Activated CD4-positive, alpha-beta T cell treated with anti-CD3 and anti-CD28 coated beads, Interleukin-2, amount 10 ng/mL, durations not matched to agents 24 days and 14 days (primary cell): ENCODE measurements at regions of chr7 and their contacts with region 1.

Region 1: DNA sequence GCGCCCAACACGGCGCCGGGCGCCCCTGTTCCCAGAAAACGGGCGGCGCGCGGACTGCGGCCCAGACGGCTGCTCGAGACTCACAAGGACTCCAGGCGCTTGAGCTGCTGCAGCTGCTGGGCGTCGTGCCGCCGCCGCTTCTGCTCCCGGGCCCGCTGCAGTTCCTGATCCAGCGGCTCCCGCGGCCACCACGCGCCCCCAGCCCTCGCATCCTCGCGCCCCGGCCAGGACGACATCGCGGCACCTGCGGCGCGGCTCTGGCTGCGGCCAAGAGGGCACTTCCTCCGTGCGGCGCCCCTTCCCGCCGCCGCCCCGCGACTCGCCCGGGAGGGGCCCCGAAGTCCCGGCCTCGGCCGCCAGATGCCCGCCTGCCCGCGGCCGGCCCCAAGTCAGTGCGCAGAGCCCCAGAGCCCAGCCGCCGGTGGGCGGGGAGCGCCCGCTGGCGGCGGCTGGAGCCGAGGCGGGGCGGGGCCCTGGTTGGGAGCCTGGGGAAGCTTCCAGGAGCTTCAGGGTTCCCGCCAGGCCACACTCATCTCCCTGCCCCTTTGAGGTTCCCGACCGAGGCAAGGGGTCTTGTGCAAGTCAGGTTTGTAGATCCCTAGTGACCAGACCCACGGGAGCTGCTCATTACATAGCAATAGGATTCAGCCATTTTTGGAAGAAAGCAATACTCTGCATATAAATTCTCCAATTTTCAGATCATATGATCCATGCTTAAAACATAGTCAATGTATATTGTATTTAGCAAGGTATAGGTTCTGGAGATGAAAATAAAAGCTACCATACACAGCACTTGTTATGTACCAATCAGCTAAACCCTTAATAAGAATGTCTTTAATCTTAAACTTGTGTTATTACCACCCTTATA is 14.2 kb upstream of the FKBP9 start:
- DNase-seq: peak; percentile 91
- H3K4me3 Mint-ChIP-seq: peak overlapping the region; percentile 93
- H3K27ac Mint-ChIP-seq: peak overlapping the region; percentile 8
- H3K4me1 Mint-ChIP-seq: peaks cover 17% of the 10 kb centered on the region
- H3K27me3 Mint-ChIP-seq: peaks cover 8% of the 10 kb centered on the region

Region 2: DNA sequence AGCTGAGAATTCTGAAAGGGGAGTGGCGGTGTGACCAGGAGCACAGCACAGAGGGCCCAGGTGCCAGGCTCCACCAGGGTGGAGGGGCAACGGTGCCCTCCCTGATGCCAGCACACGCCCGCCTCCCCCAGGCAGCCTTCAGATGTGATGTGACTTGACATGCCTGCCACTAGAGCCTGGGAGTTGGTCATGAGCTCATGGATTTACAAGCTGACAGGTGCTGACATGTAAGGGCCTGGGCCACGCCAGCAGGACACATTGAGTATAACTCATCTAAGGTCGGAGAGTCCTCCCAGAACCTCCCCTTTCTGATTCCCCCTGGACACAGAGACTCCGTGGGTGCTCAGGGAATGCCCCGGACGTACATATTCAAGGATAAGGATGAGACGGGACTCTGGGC is 527.1 kb before region 1 on chr7:
- intact Hi-C with region 1: no loop called
- DNase-seq: no peak
- H3K4me3 Mint-ChIP-seq: no peak overlapping the region
- H3K27ac Mint-ChIP-seq: no peak overlapping the region
- H3K4me1 Mint-ChIP-seq: no peaks in the 10 kb centered on the region
- H3K27me3 Mint-ChIP-seq: no peaks in the 10 kb centered on the region

Region 3: DNA sequence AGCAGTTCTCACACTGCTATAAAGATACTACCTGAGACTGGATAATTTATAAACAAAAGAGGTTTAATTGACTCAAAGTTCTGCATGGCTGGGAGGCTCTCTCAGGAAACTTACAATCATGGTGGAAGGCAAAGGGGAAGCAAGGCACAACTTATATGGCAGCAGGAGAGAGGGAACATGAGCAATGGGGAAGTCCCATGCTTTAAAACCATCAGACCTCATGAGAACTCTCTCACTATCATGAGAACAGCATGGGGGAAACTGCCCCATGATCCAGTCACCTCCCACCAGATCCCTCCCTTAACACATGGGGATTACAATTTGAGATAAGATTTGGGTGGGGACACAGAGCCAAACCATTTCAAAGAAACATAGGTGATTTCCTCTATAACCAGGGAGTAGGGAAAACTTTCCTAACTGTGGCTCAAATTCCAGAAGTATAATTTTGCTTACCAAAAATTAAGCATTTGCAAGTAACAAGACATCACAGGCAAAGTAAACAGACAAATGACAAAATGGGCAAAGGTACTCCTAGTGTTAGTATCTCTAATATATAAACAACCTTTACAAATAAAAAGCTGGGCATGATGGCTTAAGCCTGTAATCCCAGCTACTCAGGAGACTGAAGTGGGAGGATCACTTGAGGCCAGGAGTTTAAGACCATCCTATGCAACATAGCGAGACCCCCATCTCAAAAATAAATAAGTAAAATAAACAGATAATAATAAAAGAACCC is 139.4 kb before region 1 on chr7:
- intact Hi-C with region 1: loop called (anchors 2 kb)
- DNase-seq: no peak
- H3K4me3 Mint-ChIP-seq: no peak overlapping the region
- H3K27ac Mint-ChIP-seq: no peak overlapping the region
- H3K4me1 Mint-ChIP-seq: no peaks in the 10 kb centered on the region
- H3K27me3 Mint-ChIP-seq: peaks cover 5% of the 10 kb centered on the region

Region 4: DNA sequence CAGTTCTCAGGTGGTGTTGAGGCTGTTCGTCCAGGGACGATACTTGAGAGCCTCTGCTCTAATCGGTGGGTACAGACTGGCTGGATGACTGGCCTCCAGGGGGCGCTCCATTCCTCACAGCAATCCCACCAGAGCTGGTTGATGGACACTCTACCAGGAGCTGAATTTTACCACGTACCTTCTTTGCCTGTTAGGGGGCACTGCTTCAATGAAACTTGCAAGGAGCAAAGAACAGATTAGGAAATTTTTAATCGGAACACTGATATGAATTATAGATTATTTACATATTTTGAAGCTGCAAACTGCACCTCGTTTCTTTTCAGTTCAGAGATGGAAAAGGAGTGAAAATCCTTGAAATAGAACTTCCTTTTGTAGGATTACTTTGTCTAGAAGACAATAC is 96.3 kb before region 1 on chr7:
- intact Hi-C with region 1: loop called (anchors 1 kb)
- DNase-seq: peak; percentile 95
- H3K4me3 Mint-ChIP-seq: peak overlapping the region; percentile 26
- H3K27ac Mint-ChIP-seq: no peak overlapping the region
- H3K4me1 Mint-ChIP-seq: peaks cover 9% of the 10 kb centered on the region
- H3K27me3 Mint-ChIP-seq: peaks cover 27% of the 10 kb centered on the region

Region 5: DNA sequence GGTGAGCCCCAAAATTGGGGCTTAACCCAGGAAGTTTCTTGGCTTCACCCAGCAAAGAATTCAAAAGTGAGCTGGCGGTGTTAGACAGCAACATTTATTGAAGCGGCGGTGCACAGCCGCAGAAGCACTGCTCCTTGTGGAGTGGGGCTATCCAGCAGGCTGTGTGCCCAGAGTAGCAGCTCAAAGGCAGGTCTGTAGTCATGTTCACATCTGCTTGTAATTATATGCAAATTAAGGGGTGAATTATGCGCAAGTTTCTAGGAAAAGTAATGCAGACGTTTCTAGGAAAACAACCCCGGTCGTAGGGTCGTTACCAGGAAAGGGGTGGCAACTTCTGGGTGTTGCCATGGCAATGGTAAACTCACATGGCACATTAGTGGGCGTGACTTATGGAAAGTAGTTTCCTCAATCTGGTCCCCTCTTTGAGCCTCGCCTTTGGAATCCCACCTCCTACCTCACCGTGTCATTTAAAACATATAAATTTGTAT is 37.8 kb before region 1 on chr7:
- intact Hi-C with region 1: loop called (anchors 1 kb)
- DNase-seq: peak; percentile 96
- H3K4me3 Mint-ChIP-seq: peak overlapping the region; percentile 83
- H3K27ac Mint-ChIP-seq: peak overlapping the region; percentile 94
- H3K4me1 Mint-ChIP-seq: peaks cover 17% of the 10 kb centered on the region
- H3K27me3 Mint-ChIP-seq: no peaks in the 10 kb centered on the region

Region 6: GRCh38 chr7:33040803-33041516 is 97.9 kb after region 1 on chr7:
- intact Hi-C with region 1: loop called (anchors 2 kb)
- DNase-seq: peak; percentile 92
- H3K4me3 Mint-ChIP-seq: peak overlapping the region; percentile 72
- H3K27ac Mint-ChIP-seq: peak overlapping the region; percentile 56
- H3K4me1 Mint-ChIP-seq: peaks cover 42% of the 10 kb centered on the region
- H3K27me3 Mint-ChIP-seq: no peaks in the 10 kb centered on the region